IMR-90 (cell line): ENCODE measurements at regions of chr1 and their contacts with region 1.

Region 1: DNA sequence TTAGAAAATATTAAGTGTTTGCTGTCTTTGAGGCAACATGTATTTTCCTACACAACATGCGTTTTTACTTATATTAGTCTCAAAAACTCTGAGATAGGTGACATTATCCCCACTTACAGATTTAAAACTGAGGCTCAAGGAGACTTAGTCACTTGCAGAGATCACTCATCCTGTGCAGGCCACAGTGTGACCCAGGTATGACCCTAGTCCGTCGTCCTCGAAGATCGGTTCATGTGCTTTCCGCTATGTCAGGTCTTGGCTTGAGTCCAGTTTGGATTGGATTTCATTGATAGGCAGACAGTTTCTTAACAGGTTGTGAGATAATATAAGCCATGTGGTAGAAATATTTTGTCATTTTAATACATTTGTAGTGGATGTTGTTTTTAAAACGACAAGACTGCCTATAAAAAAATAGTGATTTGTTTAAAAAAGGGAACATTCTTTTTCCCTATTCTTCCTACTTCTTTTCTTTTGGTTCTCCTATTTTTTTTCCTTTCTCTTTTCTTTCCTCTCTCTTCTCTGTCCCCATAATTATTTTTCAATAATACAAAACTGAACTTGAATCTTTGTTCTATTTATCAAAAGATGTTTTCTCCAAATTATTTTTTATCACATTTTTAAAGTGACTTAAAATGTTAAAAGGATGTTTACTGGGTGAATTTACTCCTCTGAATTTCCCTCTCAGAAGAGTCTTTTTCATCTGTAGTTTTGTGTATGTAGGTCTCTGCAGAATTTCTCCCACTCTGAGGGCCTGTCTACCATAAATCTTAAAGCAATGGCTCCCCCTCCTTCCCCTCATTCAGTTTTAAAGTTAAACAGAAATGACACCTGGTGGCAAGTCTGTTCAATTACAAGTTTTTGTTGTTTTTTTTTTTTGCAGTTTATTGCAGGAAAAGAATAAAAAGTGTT is 81.8 kb downstream of the PHTF1 start:
- DNase-seq: peak; percentile 63
- ATAC-seq: peak; percentile 50
- H3K4me3 ChIP-seq: no peak overlapping the region
- H3K27ac ChIP-seq: no peak overlapping the region
- H3K4me1 ChIP-seq: peaks cover 2% of the 10 kb centered on the region; the same call in 1 of the 2 replicates
- H3K27me3 ChIP-seq: no peaks in the 10 kb centered on the region
- CTCF ChIP-seq: peak; percentile 68
- POLR2A ChIP-seq: no peak
- RAD21 ChIP-seq: peak; percentile 68

Region 2: DNA sequence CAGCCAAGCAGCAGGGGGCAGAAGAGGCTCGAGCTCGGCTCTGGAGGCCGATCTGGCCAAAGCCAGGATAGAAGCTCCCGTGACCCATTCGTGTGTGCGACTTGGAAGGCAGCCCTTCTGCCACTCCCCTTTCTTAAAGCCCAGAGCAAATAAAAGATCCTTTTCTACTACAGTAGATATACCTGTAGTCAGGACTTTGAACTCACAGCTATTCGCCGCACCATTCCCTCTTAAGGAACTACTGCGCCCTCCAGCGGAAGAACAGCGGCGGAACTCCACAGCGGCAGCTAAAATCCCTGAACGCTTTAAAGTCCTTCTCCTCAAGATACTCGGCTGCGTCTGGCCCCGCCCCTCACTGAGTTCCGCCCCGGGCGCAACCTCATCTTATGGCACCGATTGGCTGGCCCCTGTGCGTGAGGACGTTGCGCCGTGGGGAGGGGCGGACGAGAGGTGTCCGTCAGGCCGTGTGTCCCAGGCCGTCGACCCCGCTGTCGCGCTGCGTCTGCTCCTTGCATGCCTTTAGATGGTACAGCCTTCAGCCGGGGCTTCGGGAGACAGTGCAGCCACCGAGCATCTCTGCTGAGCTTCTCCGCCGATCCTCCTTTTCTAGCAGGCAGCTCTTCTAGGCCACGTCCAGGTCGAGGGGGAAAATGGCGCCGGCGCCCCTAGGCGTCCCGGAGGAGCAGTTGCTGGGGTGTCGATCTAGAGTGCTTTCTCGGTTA is 604.6 kb before region 1 on chr1 and contains the start of gene LRIG2:
- CTCF ChIA-PET with region 1: no interaction called
- POLR2A ChIA-PET with region 1: no interaction called
- dilution Hi-C with region 1: no loop called
- in situ Hi-C with region 1: no loop called
- intact Hi-C with region 1: loop called (anchors 5 kb)
- DNase-seq: peak; percentile 97
- ATAC-seq: peak; percentile 98
- H3K4me3 ChIP-seq: peak within 1 kb of the TSS; percentile 85
- H3K27ac ChIP-seq: peak within 1 kb of the TSS; percentile 97
- H3K4me1 ChIP-seq: no peaks in the 10 kb centered on the region; the same call in 1 of the 2 replicates
- H3K27me3 ChIP-seq: no peaks in the 10 kb centered on the region
- CTCF ChIP-seq: peak; percentile 58
- POLR2A ChIP-seq: peak; percentile 60
- RAD21 ChIP-seq: peak; percentile 48; the same call in 1 of the 2 replicates
- total RNA-seq, gene LRIG2: 9.0 and 10.6 TPM in 2 replicates

Region 3: GRCh38 chr1:113140588-113141446 is 536.7 kb before region 1 on chr1:
- CTCF ChIA-PET with region 1: no interaction called
- POLR2A ChIA-PET with region 1: no interaction called
- dilution Hi-C with region 1: no loop called
- in situ Hi-C with region 1: loop called (anchors 5 kb)
- intact Hi-C with region 1: loop called (anchors 1 kb)
- DNase-seq: peak; percentile 65
- ATAC-seq: peak; percentile 84
- H3K4me3 ChIP-seq: no peak overlapping the region
- H3K27ac ChIP-seq: no peak overlapping the region
- H3K4me1 ChIP-seq: peaks cover 5% of the 10 kb centered on the region
- H3K27me3 ChIP-seq: no peaks in the 10 kb centered on the region
- CTCF ChIP-seq: peak; percentile 87
- POLR2A ChIP-seq: no peak
- RAD21 ChIP-seq: peak; percentile 92

Region 4: GRCh38 chr1:113226148-113226547 is 451.4 kb before region 1 on chr1:
- CTCF ChIA-PET with region 1: no interaction called
- POLR2A ChIA-PET with region 1: no interaction called
- dilution Hi-C with region 1: no loop called
- in situ Hi-C with region 1: no loop called
- intact Hi-C with region 1: loop called (anchors 10 kb)
- DNase-seq: no peak
- ATAC-seq: no peak
- H3K4me3 ChIP-seq: no peak overlapping the region
- H3K27ac ChIP-seq: no peak overlapping the region
- H3K4me1 ChIP-seq: no peaks in the 10 kb centered on the region
- H3K27me3 ChIP-seq: peaks cover 7% of the 10 kb centered on the region
- CTCF ChIP-seq: no peak
- POLR2A ChIP-seq: no peak
- RAD21 ChIP-seq: no peak

Region 5: GRCh38 chr1:113630068-113630975 is 47.2 kb before region 1 on chr1:
- CTCF ChIA-PET with region 1: no interaction called
- POLR2A ChIA-PET with region 1: no interaction called
- dilution Hi-C with region 1: no loop called
- in situ Hi-C with region 1: no loop called
- intact Hi-C with region 1: no loop called
- DNase-seq: no peak
- ATAC-seq: no peak
- H3K4me3 ChIP-seq: no peak overlapping the region
- H3K27ac ChIP-seq: no peak overlapping the region
- H3K4me1 ChIP-seq: no peaks in the 10 kb centered on the region
- H3K27me3 ChIP-seq: no peaks in the 10 kb centered on the region
- CTCF ChIP-seq: no peak
- POLR2A ChIP-seq: no peak
- RAD21 ChIP-seq: no peak

Region 6: GRCh38 chr1:113721010-113721409 is 43.5 kb after region 1 on chr1:
- CTCF ChIA-PET with region 1: no interaction called
- POLR2A ChIA-PET with region 1: no interaction called
- dilution Hi-C with region 1: no loop called
- in situ Hi-C with region 1: no loop called
- intact Hi-C with region 1: no loop called
- DNase-seq: no peak
- ATAC-seq: no peak
- H3K4me3 ChIP-seq: no peak overlapping the region
- H3K27ac ChIP-seq: no peak overlapping the region
- H3K4me1 ChIP-seq: no peaks in the 10 kb centered on the region
- H3K27me3 ChIP-seq: no peaks in the 10 kb centered on the region
- CTCF ChIP-seq: no peak
- POLR2A ChIP-seq: no peak
- RAD21 ChIP-seq: no peak

Region 7: GRCh38 chr1:113846391-113847035 is 169.0 kb after region 1 on chr1:
- CTCF ChIA-PET with region 1: no interaction called
- POLR2A ChIA-PET with region 1: no interaction called
- dilution Hi-C with region 1: no loop called
- in situ Hi-C with region 1: no loop called
- intact Hi-C with region 1: no loop called
- DNase-seq: no peak
- ATAC-seq: no peak
- H3K4me3 ChIP-seq: no peak overlapping the region
- H3K27ac ChIP-seq: no peak overlapping the region
- H3K4me1 ChIP-seq: no peaks in the 10 kb centered on the region
- H3K27me3 ChIP-seq: no peaks in the 10 kb centered on the region
- CTCF ChIP-seq: no peak
- POLR2A ChIP-seq: no peak
- RAD21 ChIP-seq: no peak